PC-3 (cell line): ENCODE measurements at regions of chr4 and their contacts with region 1.

Region 1: DNA sequence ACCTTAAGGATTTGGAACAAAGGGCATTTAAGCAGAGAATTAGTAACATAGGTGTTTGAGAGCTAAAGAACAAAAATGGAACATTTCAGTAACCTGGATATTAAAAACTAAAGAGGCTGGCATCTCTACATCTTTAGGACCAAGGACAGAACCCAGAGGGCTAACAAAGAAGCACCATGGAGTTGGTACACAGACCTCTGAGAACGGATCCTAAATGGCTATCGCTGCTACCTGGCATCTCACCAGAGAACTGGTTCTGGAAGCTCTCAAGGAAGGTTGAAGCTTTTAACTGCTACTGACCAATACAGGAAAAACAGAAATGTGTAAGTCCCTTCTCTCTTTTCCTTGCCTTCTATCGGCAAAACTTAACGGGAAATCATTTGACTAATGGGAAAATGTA is 118.4 kb upstream of the TLL1 start:
- DNase-seq: no peak
- ATAC-seq: no peak
- H3K4me3 ChIP-seq: no peak overlapping the region
- H3K27ac ChIP-seq: no peak overlapping the region
- H3K4me1 ChIP-seq: no peaks in the 10 kb centered on the region
- H3K27me3 ChIP-seq: no peaks in the 10 kb centered on the region
- CTCF ChIP-seq: no peak

Region 2: GRCh38 chr4:165493359-165493758 is 261.3 kb before region 1 on chr4:
- CTCF ChIA-PET with region 1: no interaction called
- POLR2A ChIA-PET with region 1: no interaction called
- intact Hi-C with region 1: no loop called
- DNase-seq: peak; percentile 76
- ATAC-seq: peak; percentile 93
- H3K4me3 ChIP-seq: no peak overlapping the region
- H3K27ac ChIP-seq: no peak overlapping the region
- H3K4me1 ChIP-seq: 0 out of 2 replicates have a peak, but pooled peaks cover 4% of the 10 kb centered on the region
- H3K27me3 ChIP-seq: no peaks in the 10 kb centered on the region
- CTCF ChIP-seq: peak; percentile 86

Region 3: DNA sequence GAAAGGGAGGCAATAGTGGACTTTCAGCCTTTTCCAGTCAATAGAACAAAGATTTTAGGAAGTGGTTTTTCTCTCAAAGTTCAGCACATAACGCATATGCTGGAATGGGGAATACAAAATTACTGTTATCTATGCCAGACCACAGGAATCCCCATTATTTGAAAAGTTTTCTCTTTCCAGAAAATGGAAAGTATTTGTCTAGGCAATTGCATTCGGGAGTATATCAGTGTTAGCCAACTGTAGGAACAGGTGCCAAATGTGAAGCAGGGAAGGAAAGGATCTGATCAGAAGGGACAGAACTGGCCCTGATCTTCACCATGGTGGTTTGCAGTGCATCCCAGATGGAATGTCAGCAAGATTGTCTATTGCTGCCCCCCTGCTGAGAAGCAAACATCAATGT is 162.3 kb before region 1 on chr4:
- CTCF ChIA-PET with region 1: no interaction called
- POLR2A ChIA-PET with region 1: no interaction called
- intact Hi-C with region 1: no loop called
- DNase-seq: no peak
- ATAC-seq: no peak
- H3K4me3 ChIP-seq: no peak overlapping the region
- H3K27ac ChIP-seq: no peak overlapping the region
- H3K4me1 ChIP-seq: no peaks in the 10 kb centered on the region
- H3K27me3 ChIP-seq: no peaks in the 10 kb centered on the region
- CTCF ChIP-seq: no peak

Region 4: DNA sequence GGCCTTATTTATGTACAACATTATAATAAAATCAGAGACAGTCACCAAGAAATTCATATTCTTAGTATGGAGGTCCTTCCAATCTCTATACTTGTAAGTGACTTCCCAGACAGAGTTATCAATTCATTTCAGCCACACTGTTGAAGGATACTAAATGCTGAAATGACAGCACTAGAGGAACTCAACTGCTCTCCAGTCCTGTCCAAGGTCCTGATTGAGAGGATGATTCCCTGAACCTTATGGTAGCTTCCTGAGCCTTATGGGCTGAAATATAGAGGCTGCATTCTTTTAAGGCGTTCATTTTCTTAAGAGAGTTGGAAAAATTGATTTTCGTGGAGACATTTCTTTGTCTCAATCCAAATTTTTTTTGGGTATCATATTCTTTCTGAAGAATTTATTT is 324.3 kb after region 1 on chr4:
- CTCF ChIA-PET with region 1: no interaction called
- POLR2A ChIA-PET with region 1: interaction called, 12 read pairs
- intact Hi-C with region 1: no loop called
- DNase-seq: peak; percentile 46
- ATAC-seq: no peak
- H3K4me3 ChIP-seq: no peak overlapping the region
- H3K27ac ChIP-seq: no peak overlapping the region
- H3K4me1 ChIP-seq: peaks cover 34% of the 10 kb centered on the region
- H3K27me3 ChIP-seq: no peaks in the 10 kb centered on the region
- CTCF ChIP-seq: no peak